Activated CD4-positive, alpha-beta memory T cell treated with anti-CD3 and anti-CD28 coated beads for 36 hours (primary cell): ENCODE measurements at regions of chr2 and their contacts with region 1.

Region 1: DNA sequence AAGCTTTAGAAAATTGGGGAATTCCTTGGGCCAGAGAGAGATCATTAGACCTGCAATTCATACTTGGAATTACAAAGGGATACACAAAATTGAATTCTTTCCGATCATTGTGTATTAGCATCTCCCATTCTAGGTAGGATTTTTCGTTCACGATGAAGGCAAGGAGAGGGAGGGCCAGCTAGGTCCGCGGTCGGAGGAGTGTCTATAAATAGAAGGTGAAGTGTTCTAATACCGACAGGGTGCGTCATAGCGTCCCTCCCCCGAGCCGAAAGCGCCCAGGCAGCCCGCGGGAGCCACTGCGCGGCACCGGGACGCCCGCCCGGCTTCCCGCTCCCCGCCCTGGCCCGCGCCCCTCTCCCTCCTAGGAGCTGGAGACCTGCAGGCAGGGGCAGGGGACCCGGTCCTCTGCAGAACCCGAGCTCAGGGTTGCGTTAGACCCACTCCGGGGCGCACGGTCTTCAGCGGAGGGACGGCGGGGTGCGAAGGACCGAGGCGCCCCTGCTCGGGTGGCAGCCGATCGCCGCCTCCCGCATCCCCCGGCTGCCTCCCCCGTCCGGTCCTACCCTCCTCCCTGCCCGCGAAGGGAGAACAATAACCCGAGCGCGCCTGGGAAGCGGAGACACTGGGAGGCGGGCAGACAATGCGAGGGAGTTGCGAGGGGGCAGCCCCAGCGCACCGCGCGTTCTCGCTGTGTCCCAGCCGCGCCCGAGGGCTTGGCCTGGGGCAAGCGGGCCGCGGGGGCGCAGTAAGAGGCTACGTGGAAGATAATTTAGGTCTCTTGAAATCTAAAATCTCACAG is 114.2 kb upstream of the SERTAD2 start:
- DNase-seq: peak; percentile 84
- H3K4me3 Mint-ChIP-seq: peak overlapping the region; percentile 80
- H3K27ac Mint-ChIP-seq: peak overlapping the region; percentile 77
- H3K4me1 Mint-ChIP-seq: peaks cover 19% of the 10 kb centered on the region
- H3K27me3 Mint-ChIP-seq: no peaks in the 10 kb centered on the region

Region 2: GRCh38 chr2:64730551-64731262 is 37.2 kb before region 1 on chr2:
- CTCF ChIA-PET with region 1: no interaction called
- POLR2A ChIA-PET with region 1: no interaction called
- intact Hi-C with region 1: loop called (anchors 2 kb)
- DNase-seq: peak; percentile 47
- H3K4me3 Mint-ChIP-seq: peak overlapping the region; percentile 80
- H3K27ac Mint-ChIP-seq: peak overlapping the region; percentile 83
- H3K4me1 Mint-ChIP-seq: peaks cover 42% of the 10 kb centered on the region
- H3K27me3 Mint-ChIP-seq: no peaks in the 10 kb centered on the region

Region 3: GRCh38 chr2:64859312-64860212 is 91.7 kb after region 1 on chr2:
- CTCF ChIA-PET with region 1: no interaction called
- POLR2A ChIA-PET with region 1: no interaction called
- intact Hi-C with region 1: loop called (anchors 5 kb)
- DNase-seq: no peak
- H3K4me3 Mint-ChIP-seq: no peak overlapping the region
- H3K27ac Mint-ChIP-seq: no peak overlapping the region
- H3K4me1 Mint-ChIP-seq: peaks cover 4% of the 10 kb centered on the region
- H3K27me3 Mint-ChIP-seq: peaks cover 7% of the 10 kb centered on the region

Region 4: DNA sequence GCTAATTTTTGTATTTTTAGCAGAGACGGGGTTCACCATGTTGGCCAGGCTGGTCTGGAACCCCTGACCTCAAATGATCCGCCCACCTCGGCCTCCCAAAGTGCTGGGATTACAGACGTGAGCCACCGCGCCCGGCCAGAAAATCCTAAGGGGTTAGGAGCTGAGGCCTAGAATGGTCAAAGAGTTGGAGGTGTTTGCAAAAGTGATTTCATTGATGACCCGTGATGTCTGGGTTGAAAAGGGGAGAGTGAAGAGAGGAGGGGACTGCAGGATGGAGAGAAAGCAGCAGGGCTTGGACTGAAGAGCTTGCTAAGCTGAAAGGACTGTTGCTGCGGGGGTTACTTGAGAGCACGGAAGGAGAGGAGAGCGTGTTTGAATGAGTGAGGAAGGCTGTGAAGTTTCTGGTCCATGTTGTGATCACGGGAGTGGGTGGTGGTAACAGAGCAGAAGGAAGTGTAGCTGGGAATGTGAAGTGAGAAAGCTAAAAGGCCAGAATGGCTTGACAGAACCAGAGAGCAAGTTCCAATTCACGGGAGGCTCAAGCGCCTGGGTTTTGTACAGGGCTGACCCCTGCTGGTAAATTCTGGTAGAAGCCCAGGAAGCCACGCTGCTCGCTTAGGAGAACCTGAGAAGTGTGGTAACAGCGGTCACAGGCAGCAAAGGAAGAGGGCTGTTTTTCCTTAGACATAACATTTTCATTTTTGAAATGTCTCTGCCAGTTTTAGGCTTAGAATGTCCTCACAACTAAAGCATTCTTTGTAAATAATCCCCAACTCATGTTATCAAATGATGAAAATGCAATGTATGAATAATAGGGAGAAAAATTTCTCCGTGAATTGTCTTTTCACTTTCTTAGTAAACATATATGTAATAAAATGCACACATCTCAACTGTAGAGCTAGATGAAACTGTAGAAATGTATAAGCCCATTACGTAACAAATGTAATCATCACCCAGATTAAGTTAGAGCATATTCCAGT is 419.3 kb after region 1 on chr2:
- CTCF ChIA-PET with region 1: no interaction called
- POLR2A ChIA-PET with region 1: no interaction called
- intact Hi-C with region 1: no loop called
- DNase-seq: peak; percentile 76
- H3K4me3 Mint-ChIP-seq: no peak overlapping the region
- H3K27ac Mint-ChIP-seq: no peak overlapping the region
- H3K4me1 Mint-ChIP-seq: peaks cover 10% of the 10 kb centered on the region
- H3K27me3 Mint-ChIP-seq: peaks cover 16% of the 10 kb centered on the region